Left cardiac atrium (tissue), 4 donors: ENCODE measurements at regions of chr17 and their contacts with region 1.

Region 1: GRCh38 chr17:40622509-40622928 is 25.1 kb downstream of the SMARCE1 start:
- DNase-seq: no peak
- ATAC-seq: no peak

Region 2: DNA sequence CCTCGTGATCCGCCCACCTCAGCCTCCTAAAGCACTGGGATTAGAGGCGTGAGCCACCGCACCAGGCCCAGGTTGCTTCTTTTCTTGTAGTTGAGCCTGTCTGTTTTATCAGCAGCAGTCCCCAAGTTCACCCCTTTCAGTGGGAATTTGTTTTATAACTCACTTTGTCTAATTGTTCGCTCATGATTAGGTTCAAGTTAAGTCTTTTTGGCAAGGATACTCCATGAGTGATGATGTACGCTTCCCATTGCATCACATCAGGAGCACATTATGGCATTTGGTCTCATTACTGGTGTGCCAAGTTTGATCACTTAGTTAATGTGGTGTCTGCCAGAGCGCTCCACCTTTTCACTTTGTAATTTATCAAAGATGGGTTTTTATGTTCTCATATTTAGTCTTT is 243.6 kb before region 1 on chr17:
- intact Hi-C with region 1: no loop called
- DNase-seq: no peak
- ATAC-seq: no peak

Region 3: GRCh38 chr17:40499551-40500174 is 122.9 kb before region 1 on chr17:
- intact Hi-C with region 1: no loop called
- DNase-seq: peak; percentile 92
- ATAC-seq: peak; percentile 95 to 98

Region 4: DNA sequence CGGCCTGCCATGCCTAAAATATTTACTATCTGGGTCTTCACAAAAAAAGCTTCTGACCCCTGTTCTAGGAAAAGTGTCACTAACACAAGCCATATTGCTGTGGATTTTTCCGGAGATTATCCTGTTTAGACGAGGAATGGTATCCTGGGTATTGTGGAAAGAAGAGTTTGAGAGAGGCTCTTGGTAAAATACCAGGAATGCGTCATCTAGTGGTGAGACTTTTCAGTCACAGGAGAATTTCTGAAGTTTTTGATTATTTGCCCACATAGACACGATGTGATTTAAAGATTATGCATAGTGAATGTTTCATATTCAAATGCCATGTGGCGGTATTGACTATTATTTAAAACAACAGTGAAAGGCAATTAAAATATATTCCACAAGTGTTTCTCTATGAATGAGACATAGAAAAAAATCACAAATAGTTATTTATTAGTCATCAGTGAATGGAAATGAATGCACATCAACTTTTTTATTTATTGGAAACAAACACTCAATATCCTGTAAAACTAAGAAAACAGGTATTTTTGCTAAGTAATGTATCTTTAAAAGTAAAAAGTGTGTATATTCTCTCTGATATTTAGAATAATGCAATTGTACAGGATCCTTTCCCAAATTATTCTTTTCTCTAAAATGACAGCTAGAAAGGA is 169.4 kb after region 1 on chr17:
- intact Hi-C with region 1: loop called (anchors 5 to 10 kb)
- DNase-seq: no peak
- ATAC-seq: peak in 1 of 2 donors; percentile 27